ENCODE measurements at regions of chr4 and their contacts with region 1.

Region 1: DNA sequence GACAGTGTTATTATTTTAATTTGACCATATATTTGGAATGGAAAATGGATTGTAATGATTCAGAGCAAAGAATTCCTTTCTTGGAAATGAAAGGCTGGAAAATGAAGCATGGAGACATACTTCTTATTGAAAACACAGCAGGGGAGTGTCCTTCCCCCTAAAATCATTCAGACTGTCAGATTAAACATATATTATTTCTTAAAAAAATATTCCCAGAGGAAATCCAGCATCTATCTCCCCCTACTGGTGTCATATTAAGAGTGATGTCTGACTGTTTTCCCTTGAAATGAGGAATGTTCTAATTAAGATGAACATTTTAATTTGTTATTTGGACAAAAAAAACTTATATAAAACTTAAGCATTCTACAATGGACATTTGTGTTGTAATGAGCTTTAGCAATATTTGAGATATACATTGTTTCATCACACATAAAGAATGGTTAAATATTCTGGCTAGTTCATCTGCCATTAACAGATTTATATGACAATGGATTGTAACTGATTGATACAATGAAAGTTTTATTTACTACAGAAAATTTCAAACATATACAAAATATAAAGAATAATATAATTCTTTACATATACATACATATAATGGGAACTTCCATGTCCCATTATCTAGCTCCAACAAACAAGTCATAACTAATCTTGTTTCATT is 264.6 kb downstream of the SPRY1 start:
- DNase-seq: no peak
- H3K4me3 Mint-ChIP-seq: no peak overlapping the region
- H3K27ac Mint-ChIP-seq: no peak overlapping the region
- H3K4me1 Mint-ChIP-seq: peaks cover 11% of the 10 kb centered on the region
- H3K27me3 Mint-ChIP-seq: peaks cover 20% of the 10 kb centered on the region

Region 2: DNA sequence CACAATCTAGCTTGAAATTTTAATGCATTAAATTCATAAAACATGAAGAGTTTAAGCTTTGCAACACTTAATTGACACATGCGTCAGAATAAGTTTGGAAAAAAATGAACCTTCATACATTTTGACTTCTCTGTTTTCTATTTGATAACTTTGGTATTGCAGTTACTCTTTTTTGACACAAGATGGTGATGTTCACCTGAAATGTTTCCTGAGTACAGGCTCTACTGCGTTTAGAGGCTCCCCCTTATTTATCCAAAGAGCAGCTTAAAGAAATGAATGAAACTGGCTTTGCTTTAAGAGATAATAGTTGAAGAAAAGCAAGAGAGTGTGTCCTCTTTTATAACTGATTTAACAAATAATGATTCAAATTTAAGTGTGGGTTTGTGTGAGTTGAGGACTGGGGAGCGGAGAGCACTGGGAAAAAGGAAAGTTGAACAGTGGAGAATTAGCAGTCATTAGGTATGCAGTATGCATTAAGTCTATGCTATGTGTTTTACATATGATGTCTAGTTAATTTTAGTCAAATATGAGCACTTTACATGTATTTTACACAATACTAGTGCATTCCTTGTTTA is 558.2 kb before region 1 on chr4:
- CTCF ChIA-PET with region 1: interaction called, 5 read pairs
- intact Hi-C with region 1: loop called (anchors 1 kb)
- DNase-seq: no peak
- H3K4me3 Mint-ChIP-seq: no peak overlapping the region
- H3K27ac Mint-ChIP-seq: no peak overlapping the region
- H3K4me1 Mint-ChIP-seq: no peaks in the 10 kb centered on the region
- H3K27me3 Mint-ChIP-seq: no peaks in the 10 kb centered on the region

Region 3: GRCh38 chr4:123350191-123350544 is 311.0 kb before region 1 on chr4:
- CTCF ChIA-PET with region 1: interaction called, 3 read pairs
- intact Hi-C with region 1: loop called (anchors 5 kb)
- DNase-seq: peak; percentile 20
- H3K4me3 Mint-ChIP-seq: no peak overlapping the region
- H3K27ac Mint-ChIP-seq: no peak overlapping the region
- H3K4me1 Mint-ChIP-seq: peaks cover 2% of the 10 kb centered on the region
- H3K27me3 Mint-ChIP-seq: peaks cover 7% of the 10 kb centered on the region

Region 4: DNA sequence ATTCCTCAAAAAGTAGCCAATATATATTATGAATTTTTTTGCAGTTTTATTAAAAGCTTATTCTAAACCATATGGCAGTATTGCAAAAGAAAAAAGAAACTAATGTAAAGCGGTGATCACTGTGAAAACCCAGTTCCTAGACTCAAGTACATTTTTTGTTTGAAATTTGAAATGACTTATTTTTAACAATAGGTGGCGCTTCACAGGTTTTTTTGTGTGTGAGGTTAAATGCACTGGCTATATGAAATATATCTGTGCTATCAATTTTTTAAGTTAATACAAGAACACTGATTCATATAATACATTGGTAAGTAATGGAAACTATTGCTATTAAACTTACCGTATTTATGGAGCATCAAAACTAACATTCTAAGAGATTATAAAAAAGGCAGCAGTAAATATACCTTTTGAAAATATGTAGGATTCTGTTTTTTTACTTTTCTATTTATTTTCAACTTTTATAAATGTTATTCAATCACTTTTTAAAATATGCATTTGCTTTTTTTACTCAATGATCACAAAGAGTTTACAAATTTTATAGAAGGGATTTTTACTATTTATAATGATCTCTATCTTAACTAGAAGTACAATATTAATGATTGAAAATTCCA is 270.3 kb before region 1 on chr4:
- CTCF ChIA-PET with region 1: interaction called, 8 read pairs
- intact Hi-C with region 1: loop called (anchors 1 kb)
- DNase-seq: no peak
- H3K4me3 Mint-ChIP-seq: no peak overlapping the region
- H3K27ac Mint-ChIP-seq: no peak overlapping the region
- H3K4me1 Mint-ChIP-seq: no peaks in the 10 kb centered on the region
- H3K27me3 Mint-ChIP-seq: peaks cover 3% of the 10 kb centered on the region

Region 5: GRCh38 chr4:123564758-123565346 is 96.4 kb before region 1 on chr4:
- CTCF ChIA-PET with region 1: interaction called, 7 read pairs
- intact Hi-C with region 1: loop called (anchors 1 kb)
- DNase-seq: peak; percentile 65
- H3K4me3 Mint-ChIP-seq: no peak overlapping the region
- H3K27ac Mint-ChIP-seq: no peak overlapping the region
- H3K4me1 Mint-ChIP-seq: no peaks in the 10 kb centered on the region
- H3K27me3 Mint-ChIP-seq: no peaks in the 10 kb centered on the region